ENCODE measurements at regions of chr18 and their contacts with region 1.

Region 1: DNA sequence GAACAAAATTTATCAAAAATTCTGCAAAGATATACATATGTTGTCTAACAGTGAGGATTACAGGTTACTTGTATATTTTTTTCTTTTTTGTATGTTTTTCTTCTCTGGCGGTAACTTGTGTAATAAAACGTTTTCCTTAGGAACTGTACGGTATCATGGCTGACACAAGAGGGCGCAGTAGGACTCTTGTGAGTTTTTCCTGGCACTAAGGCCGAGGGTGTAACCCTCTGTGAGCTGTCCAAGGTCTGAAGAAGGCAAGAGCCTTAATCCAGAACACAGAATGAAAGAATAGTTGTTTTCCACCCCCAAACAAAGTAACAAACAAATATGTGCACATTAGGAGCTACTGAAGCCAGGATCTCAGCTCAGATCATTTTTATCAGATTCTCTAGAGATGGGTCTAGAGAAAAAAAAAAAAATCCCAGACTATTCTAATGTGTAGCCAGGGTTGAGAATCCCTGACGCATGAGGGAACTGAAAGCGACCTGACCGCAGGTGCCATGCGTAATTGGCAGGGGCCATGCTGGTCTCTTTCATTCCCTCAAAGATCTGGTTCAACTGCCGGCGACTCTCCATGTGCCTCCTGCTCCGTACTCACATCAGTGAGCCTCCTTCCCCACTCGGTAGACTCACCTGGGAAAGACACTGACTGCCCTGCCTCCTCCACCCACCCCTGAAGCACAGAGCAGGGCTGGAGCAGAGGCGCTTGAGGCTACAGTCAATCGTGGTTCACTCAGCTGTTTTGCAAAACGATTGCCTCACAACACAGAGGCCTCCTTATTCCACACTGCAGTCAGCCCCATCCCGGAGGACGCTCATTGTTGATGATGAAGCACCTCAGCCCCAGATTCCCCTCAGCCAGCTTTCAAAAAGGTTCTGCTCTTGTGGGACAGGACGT is 26.9 kb downstream of the TMEM200C start:
- DNase-seq: peak in 2 of 9 experiments; percentile 8 to 29
- ATAC-seq: no peak
- H3K4me3 ChIP-seq: no peak overlapping the region
- H3K4me3 Mint-ChIP-seq: no peak overlapping the region
- H3K27ac ChIP-seq: no peak overlapping the region
- H3K27ac Mint-ChIP-seq: no peak overlapping the region
- H3K4me1 ChIP-seq: no peaks in the 10 kb centered on the region
- H3K4me1 Mint-ChIP-seq: no peaks in the 10 kb centered on the region
- H3K27me3 ChIP-seq: no peaks in the 10 kb centered on the region
- H3K27me3 Mint-ChIP-seq: no peaks in the 10 kb centered on the region
- CTCF ChIP-seq: no peak

Region 2: GRCh38 chr18:5275872-5276271 is 592.6 kb before region 1 on chr18:
- CTCF ChIA-PET with region 1: no interaction called
- POLR2A ChIA-PET with region 1: no interaction called
- intact Hi-C with region 1: no loop called
- DNase-seq: no peak
- ATAC-seq: no peak
- H3K4me3 ChIP-seq: no peak overlapping the region
- H3K4me3 Mint-ChIP-seq: no peak overlapping the region
- H3K27ac ChIP-seq: no peak overlapping the region
- H3K27ac Mint-ChIP-seq: no peak overlapping the region
- H3K4me1 ChIP-seq: no peaks in the 10 kb centered on the region
- H3K4me1 Mint-ChIP-seq: no peaks in the 10 kb centered on the region
- H3K27me3 ChIP-seq: no peaks in the 10 kb centered on the region
- H3K27me3 Mint-ChIP-seq: no peaks in the 10 kb centered on the region
- CTCF ChIP-seq: no peak

Region 3: DNA sequence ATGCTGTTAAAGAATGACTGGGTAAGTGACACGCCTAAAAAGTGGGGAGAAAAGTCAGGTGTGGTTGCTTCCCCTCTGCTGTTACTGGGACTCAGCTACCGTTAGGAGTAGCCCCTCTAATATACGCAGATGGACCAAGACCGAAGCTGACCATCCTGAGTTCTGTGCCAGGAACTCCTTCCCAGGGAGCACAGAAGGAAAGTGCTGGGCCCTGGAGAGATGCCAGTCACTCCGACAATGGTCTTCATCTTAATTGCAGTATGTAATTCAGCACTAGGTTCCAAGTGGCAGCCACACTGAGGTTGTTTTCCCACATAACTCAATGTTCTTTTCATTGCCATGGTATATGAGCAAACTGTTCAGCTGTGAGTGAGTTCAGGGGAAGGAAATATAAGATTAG is 46.5 kb after region 1 on chr18:
- CTCF ChIA-PET with region 1: no interaction called
- POLR2A ChIA-PET with region 1: no interaction called
- intact Hi-C with region 1: loop called in 1 of 2 experiments (anchors 10 kb)
- DNase-seq: no peak
- ATAC-seq: no peak
- H3K4me3 ChIP-seq: no peak overlapping the region
- H3K4me3 Mint-ChIP-seq: no peak overlapping the region
- H3K27ac ChIP-seq: no peak overlapping the region
- H3K27ac Mint-ChIP-seq: no peak overlapping the region
- H3K4me1 ChIP-seq: no peaks in the 10 kb centered on the region
- H3K4me1 Mint-ChIP-seq: no peaks in the 10 kb centered on the region
- H3K27me3 ChIP-seq: no peaks in the 10 kb centered on the region
- H3K27me3 Mint-ChIP-seq: peaks cover 5% of the 10 kb centered on the region
- CTCF ChIP-seq: no peak

Measured in CD8-positive, alpha-beta T cell (primary cell).